ENCODE measurements at regions of chr4 and their contacts with region 1.

Region 1: DNA sequence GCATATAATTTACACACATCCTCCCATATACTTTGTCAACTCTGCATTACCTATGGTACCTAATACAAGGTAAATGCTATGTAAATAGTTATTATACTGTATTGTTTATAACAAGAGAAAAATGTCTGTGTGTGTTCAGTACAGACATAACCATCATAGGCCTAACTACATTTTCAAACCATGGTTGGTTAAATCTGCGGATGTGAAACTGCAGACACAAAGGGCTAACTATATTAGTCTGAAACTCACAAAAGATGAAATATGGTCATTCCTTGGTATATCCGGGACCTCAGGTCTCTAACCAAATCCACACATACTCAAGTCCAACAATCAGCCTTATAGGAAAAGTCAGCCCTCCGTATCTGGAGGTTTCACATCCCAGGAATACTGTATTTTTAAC is 13.5 kb downstream of the MAPK10 start:
- DNase-seq: no peak
- H3K4me3 ChIP-seq: no peak overlapping the region
- H3K27ac ChIP-seq: no peak overlapping the region
- H3K4me1 ChIP-seq: no peaks in the 10 kb centered on the region
- H3K27me3 ChIP-seq: no peaks in the 10 kb centered on the region
- CTCF ChIP-seq: no peak

Region 2: DNA sequence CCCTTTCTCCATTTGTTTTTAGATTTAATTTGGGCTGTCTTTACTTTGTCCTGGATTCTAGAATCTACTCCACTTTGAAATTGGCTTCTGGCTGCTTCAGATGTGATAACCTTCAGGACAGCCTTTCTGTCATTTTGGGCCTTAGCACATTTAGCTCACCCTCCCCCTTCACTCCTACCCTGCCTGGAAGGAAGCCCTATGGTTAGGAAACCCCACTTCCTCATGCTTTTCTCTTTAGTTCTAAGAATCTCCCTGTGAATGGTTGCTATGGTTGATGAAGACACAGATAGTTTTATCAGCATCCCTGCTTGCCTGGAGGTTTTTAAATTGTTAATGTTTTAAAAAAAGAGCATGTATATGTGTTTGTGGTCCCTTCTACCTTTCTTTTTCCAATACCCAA is 147.1 kb after region 1 on chr4:
- CTCF ChIA-PET with region 1: no interaction called
- POLR2A ChIA-PET with region 1: no interaction called
- intact Hi-C with region 1: no loop called
- DNase-seq: no peak
- H3K4me3 ChIP-seq: no peak overlapping the region
- H3K27ac ChIP-seq: no peak overlapping the region
- H3K4me1 ChIP-seq: peaks cover 30% of the 10 kb centered on the region
- H3K27me3 ChIP-seq: no peaks in the 10 kb centered on the region
- CTCF ChIP-seq: no peak

Region 3: DNA sequence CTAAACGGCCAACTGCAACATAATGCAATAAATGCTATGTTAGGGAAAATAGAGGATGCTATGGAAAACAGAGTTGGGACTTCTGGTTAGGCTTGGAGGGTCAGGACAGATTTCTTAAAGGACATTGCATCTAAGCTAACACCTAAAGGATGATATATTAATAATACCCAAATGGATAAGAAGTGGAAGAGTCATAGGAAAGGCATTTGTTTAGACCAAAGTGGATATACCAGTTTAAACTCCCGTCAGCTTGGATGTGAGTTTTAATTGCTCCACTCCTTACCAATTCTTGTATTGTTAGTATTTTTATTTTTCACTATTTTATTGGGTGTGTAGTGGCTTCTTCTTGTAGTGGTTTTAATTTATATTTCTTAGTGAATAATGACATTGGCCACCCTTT is 341.7 kb after region 1 on chr4:
- CTCF ChIA-PET with region 1: interaction called, 10 read pairs
- POLR2A ChIA-PET with region 1: no interaction called
- intact Hi-C with region 1: no loop called
- DNase-seq: no peak
- H3K4me3 ChIP-seq: no peak overlapping the region
- H3K27ac ChIP-seq: no peak overlapping the region
- H3K4me1 ChIP-seq: peaks cover 10% of the 10 kb centered on the region
- H3K27me3 ChIP-seq: no peaks in the 10 kb centered on the region
- CTCF ChIP-seq: no peak